Tibial artery (tissue), 4 donors: ENCODE measurements at regions of chrX and their contacts with region 1.

Region 1: GRCh38 chrX:19392703-19393102 is 49.0 kb downstream of the PDHA1 start:
- DNase-seq: no peak
- H3K4me3 ChIP-seq: no peak overlapping the region
- H3K27ac ChIP-seq: no peak overlapping the region
- H3K4me1 ChIP-seq: no peaks in the 10 kb centered on the region
- H3K27me3 ChIP-seq: no peaks in the 10 kb centered on the region
- CTCF ChIP-seq: no peak

Region 2: DNA sequence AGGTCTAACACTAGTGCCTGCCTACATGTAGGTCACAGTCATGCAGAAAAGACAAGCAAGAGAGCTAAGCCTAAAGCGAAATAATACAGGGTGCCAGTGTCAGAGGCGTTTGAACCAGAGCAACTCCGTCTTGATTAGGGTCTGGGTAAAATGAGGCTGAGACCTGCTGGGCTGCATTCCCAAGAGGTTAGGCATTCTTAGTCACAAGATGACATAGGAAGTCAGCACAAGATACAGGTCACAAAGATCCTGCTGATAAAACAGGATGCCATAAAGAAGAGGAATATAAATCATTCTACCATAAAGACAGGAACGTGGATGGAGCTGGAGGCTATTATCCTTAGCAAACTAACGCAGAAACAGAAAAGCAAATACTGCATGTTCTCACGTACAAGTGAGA is 1292.9 kb before region 1 on chrX:
- intact Hi-C with region 1: loop called (anchors 10 kb)
- DNase-seq: no peak
- H3K4me3 ChIP-seq: no peak overlapping the region
- H3K27ac ChIP-seq: no peak overlapping the region
- H3K4me1 ChIP-seq: peaks cover 0 to 3% (median 0%) of the 10 kb centered on the region in 4 donors
- H3K27me3 ChIP-seq: no peaks in the 10 kb centered on the region
- CTCF ChIP-seq: no peak